AG04449 (cell line): ENCODE measurements at regions of chr6 and their contacts with region 1.

Region 1: GRCh38 chr6:47780510-47781356 is 1.1 kb upstream of the OPN5 start:
- DNase-seq: peak; percentile 42
- H3K4me3 ChIP-seq: no peak overlapping the region
- CTCF ChIP-seq: peak; percentile 47

Region 2: GRCh38 chr6:47407348-47408281 is 373.1 kb before region 1 on chr6:
- CTCF ChIA-PET with region 1: interaction called, 46 read pairs
- POLR2A ChIA-PET with region 1: no interaction called
- DNase-seq: no peak
- H3K4me3 ChIP-seq: no peak overlapping the region
- CTCF ChIP-seq: no peak

Region 3: GRCh38 chr6:47413752-47414422 is 366.8 kb before region 1 on chr6:
- CTCF ChIA-PET with region 1: interaction called, 46 read pairs
- POLR2A ChIA-PET with region 1: no interaction called
- DNase-seq: peak; percentile 19
- H3K4me3 ChIP-seq: no peak overlapping the region; the same call in 1 of the 2 replicates
- CTCF ChIP-seq: peak; percentile 81